KBM-7 (cell line): ENCODE measurements at regions of chr4 and their contacts with region 1.

Region 1: GRCh38 chr4:38319456-38320342 is 344.3 kb upstream of the KLF3 start:
- DNase-seq: peak; percentile 96

Region 2: GRCh38 chr4:38062088-38062893 is 257.4 kb before region 1 on chr4:
- in situ Hi-C with region 1: loop called (anchors 25 kb)
- DNase-seq: peak; percentile 76

Region 3: DNA sequence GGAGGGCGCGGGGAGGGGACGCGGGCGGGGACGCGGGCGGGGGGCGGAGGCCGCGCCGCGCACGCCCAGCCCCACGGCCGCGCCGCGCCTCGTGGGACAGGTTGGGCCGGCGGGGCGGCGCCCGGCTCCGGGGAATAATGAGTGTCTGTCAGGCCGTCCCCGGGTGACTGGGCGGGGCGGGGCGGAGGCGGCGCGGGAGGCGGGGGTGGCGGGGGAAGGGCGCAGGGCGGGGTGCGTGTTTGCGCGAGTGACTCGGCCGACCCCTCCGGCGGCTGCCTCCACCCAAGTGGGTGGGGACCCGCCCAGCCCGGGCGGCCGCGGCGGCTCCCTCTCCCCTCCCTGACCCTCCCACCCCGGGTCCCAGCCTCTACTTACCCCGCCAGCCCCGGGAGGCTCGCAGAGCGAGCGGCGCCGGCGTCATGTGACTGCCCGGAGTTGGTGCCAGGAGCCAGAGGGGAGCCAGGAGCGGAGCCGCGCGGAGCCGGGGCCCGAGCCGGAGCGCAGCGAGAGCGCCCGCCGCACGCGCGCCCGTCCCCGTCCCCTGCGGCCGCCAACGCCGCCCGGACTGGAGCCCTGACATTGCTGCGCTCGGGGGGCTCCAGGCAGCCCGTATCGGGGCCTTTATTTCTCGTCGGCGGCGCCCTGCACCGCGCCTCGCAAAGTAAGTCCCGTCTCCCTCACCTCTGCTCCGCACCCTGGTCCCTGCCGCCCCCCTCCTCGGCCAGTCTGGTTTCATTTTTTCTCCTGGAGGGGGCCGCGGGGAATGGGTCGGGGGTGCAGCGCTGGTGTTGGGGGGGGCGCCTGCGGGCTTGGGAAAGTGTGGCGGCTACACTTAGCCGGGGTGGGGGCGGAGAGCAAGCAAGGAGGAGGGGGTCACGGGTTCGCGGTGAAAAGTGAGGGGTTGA is 344.4 kb after region 1 on chr4 and contains the start of gene KLF3:
- in situ Hi-C with region 1: loop called (anchors 25 kb)
- DNase-seq: peak; percentile 66